HCT116 (cell line): ENCODE measurements at regions of chr2 and their contacts with region 1.

Region 1: GRCh38 chr2:130797493-130798435 is 39.0 kb upstream of the ARHGEF4 start:
- DNase-seq: peak; percentile 61
- ATAC-seq: peak; percentile 94
- H3K4me3 ChIP-seq: peak overlapping the region; percentile 45 to 65
- H3K27ac ChIP-seq: peak overlapping the region; percentile 78
- H3K4me1 ChIP-seq: peaks cover 4 to 14% of the 10 kb centered on the region in 2 experiments; a peak in 2 of 4 replicates
- H3K27me3 ChIP-seq: no peaks in the 10 kb centered on the region
- CTCF ChIP-seq: peak; percentile 77 to 95 (median 92)
- POLR2A ChIP-seq: peak; percentile 56
- RAD21 ChIP-seq: peak; percentile 97

Region 2: GRCh38 chr2:130135692-130136541 is 661.8 kb before region 1 on chr2:
- CTCF ChIA-PET with region 1: no interaction called
- POLR2A ChIA-PET with region 1: no interaction called
- RAD21 ChIA-PET with region 1: no interaction called
- intact Hi-C with region 1: no loop called
- DNase-seq: no peak
- ATAC-seq: no peak
- H3K4me3 ChIP-seq: no peak overlapping the region
- H3K27ac ChIP-seq: no peak overlapping the region
- H3K4me1 ChIP-seq: no peaks in the 10 kb centered on the region
- H3K27me3 ChIP-seq: no peaks in the 10 kb centered on the region
- CTCF ChIP-seq: no peak
- POLR2A ChIP-seq: no peak
- RAD21 ChIP-seq: no peak

Region 3: GRCh38 chr2:130873700-130874346 is 76.1 kb after region 1 on chr2:
- CTCF ChIA-PET with region 1: interaction called, 19 read pairs
- POLR2A ChIA-PET with region 1: no interaction called
- RAD21 ChIA-PET with region 1: interaction called, 3 to 12 read pairs
- intact Hi-C with region 1: loop called (anchors 1 kb)
- DNase-seq: peak; percentile 28
- ATAC-seq: peak; percentile 85
- H3K4me3 ChIP-seq: no peak overlapping the region
- H3K27ac ChIP-seq: no peak overlapping the region
- H3K4me1 ChIP-seq: no peaks in the 10 kb centered on the region
- H3K27me3 ChIP-seq: no peaks in the 10 kb centered on the region
- CTCF ChIP-seq: peak; percentile 67 to 89 (median 75)
- POLR2A ChIP-seq: no peak
- RAD21 ChIP-seq: peak; percentile 81

Region 4: DNA sequence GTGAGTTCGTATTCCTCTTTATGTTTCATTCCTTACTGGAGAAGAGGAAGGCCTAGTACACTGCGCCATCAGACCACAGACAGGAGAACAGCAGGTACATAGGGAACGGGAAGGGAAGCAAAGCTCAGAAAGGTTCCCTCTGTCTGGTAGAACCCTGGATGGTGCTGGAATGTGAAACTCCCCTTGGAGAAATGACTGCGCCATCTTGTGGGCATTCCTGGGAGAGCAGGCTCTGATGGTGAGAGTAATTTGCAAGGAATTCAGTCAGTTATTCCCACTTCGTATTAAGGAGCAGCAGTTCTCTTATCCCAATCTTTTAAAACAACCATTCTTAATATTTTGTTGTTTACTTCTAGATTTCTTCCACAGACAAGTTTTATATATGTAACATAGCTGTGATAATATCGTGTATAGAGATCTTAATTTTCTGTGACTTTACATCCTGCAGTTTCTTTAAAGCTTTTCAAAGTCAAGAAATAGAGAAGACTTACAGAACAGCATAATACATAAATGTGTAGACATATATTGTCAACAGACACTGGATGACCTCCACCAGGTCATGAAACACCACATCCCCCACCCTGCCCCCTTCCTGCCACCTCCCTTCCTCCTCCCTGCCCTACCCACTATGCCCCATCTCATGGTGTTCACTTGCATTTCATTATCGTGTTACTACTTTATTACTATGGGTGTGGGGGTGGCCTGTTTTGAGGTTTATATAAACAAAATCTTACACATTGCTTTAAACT is 122.8 kb after region 1 on chr2:
- CTCF ChIA-PET with region 1: interaction called, 15 read pairs
- POLR2A ChIA-PET with region 1: no interaction called
- RAD21 ChIA-PET with region 1: interaction called in 1 of 2 experiments, 3 read pairs
- intact Hi-C with region 1: loop called (anchors 1 kb)
- DNase-seq: peak; percentile 62
- ATAC-seq: peak; percentile 86
- H3K4me3 ChIP-seq: no peak overlapping the region
- H3K27ac ChIP-seq: no peak overlapping the region
- H3K4me1 ChIP-seq: no peaks in the 10 kb centered on the region
- H3K27me3 ChIP-seq: no peaks in the 10 kb centered on the region
- CTCF ChIP-seq: peak; percentile 89 to 96 (median 95)
- POLR2A ChIP-seq: no peak
- RAD21 ChIP-seq: peak; percentile 84

Region 5: DNA sequence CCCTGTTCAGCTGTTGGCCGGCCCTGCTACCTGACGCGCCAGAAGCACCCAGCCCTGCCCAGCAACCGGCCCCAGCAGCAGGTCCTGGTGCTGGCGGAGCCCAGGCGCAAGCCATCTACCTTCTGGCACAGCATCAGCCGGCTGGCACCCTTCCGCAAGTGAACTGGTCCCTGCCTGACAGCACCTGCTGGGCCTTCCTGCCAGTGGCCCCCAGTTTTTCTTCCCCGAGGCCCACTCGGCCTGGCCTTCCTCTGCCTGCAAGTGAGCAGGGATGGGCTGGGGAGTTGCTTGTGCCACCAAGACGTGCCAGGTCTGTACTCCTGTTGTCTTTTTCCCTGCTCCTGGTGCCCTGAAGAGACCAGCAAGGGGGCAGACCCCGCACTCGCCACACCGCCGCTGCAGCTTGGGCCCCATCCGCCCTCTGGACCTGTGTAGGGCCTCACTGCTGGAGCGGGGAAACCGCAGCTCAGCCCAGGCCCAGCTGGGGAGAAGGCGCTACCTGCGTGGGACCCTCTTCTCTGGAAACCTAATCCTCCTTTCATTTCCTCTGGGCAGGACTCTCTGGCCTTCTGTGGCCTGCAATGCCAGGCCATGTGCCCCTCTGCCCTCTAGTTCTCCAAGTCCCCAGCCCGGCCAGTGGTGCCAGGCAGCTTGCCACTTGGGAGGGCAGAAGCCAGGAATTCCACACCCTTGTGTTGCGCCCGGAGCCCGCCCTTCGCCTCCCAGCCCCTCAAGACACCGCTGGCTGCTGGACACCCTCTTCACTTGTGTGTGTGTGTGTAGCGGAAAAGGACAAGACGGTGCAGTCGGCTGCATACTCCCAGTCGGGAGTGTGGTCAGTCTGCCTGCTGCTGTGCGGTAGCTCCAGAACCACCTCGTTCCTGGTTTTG is 248.5 kb after region 1 on chr2:
- CTCF ChIA-PET with region 1: interaction called, 3 read pairs
- POLR2A ChIA-PET with region 1: no interaction called
- RAD21 ChIA-PET with region 1: no interaction called
- intact Hi-C with region 1: loop called (anchors 5 kb)
- DNase-seq: no peak
- ATAC-seq: peak; percentile 17; the same call in 1 of the 2 replicates
- H3K4me3 ChIP-seq: no peak overlapping the region
- H3K27ac ChIP-seq: no peak overlapping the region
- H3K4me1 ChIP-seq: 0 out of 4 replicates have a peak, but pooled peaks cover 0 to 5% of the 10 kb centered on the region in 2 experiments
- H3K27me3 ChIP-seq: no peaks in the 10 kb centered on the region
- CTCF ChIP-seq: no peak
- POLR2A ChIP-seq: no peak
- RAD21 ChIP-seq: no peak

Region 6: GRCh38 chr2:131105156-131105949 is 307.6 kb after region 1 on chr2 and contains the start of gene PLEKHB2:
- CTCF ChIA-PET with region 1: no interaction called
- POLR2A ChIA-PET with region 1: interaction called, 3 read pairs
- RAD21 ChIA-PET with region 1: interaction called in 1 of 2 experiments, 3 read pairs
- intact Hi-C with region 1: loop called (anchors 10 kb)
- DNase-seq: peak; percentile 83
- ATAC-seq: peak; percentile 83
- H3K4me3 ChIP-seq: peak within 1 kb of the TSS; percentile 91 to 97
- H3K27ac ChIP-seq: peak within 1 kb of the TSS; percentile 81
- H3K4me1 ChIP-seq: peaks cover 13 to 18% of the 10 kb centered on the region in 2 experiments
- H3K27me3 ChIP-seq: no peaks in the 10 kb centered on the region
- CTCF ChIP-seq: no peak
- POLR2A ChIP-seq: peak; percentile 89
- RAD21 ChIP-seq: no peak; the same call in 1 of the 2 replicates
- total RNA-seq, gene PLEKHB2: 94.8 TPM